A673 (cell line): ENCODE measurements at regions of chr1 and their contacts with region 1.

Region 1: DNA sequence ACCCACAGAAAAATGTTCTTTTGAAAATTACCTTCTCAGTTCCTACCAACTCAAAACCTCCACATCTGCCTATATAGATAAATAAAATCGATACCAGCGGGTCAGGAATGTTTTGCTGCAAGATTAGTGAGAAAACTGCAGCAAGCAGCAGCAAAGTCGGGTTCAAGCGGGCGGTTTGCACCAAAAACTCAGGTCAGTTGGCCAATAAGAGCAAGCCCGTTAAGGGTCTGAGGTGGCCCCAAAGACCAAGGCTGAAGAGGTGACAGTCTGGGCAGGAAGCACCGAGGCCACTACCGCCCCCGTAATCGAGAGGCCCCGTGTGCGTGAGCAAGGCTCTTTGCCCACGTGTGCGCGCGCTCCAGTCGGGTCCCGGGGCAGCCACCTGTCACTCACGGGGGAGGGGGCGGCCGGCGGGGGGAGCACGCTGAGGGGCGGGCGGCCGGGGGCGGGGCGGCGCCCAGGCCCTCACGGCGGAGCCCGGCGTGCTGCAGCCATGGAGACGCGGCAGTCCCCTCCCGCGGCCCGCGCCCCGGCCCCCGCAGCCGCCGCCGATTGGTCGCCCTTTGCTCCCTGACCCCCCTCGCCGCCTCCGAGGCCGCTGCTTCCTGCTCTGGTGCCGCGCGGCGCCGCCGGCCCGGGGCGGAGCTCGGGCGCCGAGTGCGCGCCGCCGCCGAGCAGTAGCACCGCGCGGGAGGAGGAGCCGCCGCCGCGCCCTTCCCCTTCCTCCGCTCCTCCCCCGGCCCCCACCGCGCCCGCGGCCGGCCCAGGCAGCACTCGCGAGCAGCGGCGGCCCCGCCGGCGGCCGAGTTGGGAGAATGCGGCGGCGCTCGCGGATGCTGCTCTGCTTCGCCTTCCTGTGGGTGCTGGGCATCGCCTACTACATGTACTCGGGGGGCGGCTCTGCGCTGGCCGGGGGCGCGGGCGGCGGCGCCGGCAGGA is at the start of gene GALNT2:
- DNase-seq: peak; percentile 94
- H3K4me3 ChIP-seq: peak within 1 kb of the TSS; percentile 96
- H3K27ac ChIP-seq: peak within 1 kb of the TSS; percentile 79
- H3K4me1 ChIP-seq: peaks cover 21% of the 10 kb centered on the region
- H3K27me3 ChIP-seq: no peaks in the 10 kb centered on the region
- CTCF ChIP-seq: no peak
- total RNA-seq, gene GALNT2: 80.5 and 94.6 TPM in 2 replicates

Region 2: DNA sequence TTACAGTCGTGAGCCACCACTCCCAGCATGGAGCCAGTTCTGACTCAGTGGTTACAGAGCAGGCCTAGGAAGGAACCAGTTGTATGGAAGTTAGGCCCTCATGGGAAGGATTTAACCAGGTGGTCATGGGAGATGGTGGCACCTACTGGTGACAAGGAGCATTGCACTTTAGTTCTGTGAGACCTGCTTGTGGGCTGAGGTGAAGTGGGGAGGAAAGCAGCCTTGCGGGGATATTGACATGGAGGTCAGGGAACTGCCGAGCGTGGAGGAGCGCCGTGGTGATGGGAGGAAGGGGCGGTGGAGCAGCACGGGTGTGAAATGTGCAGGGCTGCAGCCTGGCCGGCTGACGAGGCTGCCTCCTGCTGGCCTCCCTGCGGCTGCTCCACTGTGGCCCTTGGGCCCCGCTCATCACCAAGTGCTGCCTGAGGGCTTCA is 100.7 kb after region 1 on chr1:
- CTCF ChIA-PET with region 1: no interaction called
- POLR2A ChIA-PET with region 1: no interaction called
- intact Hi-C with region 1: loop called (anchors 2 kb)
- DNase-seq: peak; percentile 73
- H3K4me3 ChIP-seq: no peak overlapping the region
- H3K27ac ChIP-seq: no peak overlapping the region
- H3K4me1 ChIP-seq: peaks cover 33% of the 10 kb centered on the region
- H3K27me3 ChIP-seq: no peaks in the 10 kb centered on the region
- CTCF ChIP-seq: peak; percentile 74

Region 3: DNA sequence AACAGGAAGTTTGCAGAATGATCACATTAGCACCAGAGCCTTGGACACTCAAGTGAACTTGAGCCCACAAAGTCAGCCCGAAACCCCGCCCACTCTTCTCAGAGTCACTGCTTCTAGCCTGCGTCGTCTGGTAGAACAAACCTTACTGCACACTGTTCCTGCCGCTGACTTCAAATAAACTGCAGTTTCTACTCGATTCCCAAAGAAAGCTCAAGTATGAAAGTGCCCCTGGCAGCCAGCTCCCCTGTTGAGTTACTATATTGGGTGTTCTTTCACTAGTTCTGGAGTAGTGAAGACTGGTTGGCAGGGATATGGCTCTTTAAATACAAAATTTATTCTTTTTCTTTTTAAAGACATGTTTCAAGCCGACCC is 165.0 kb after region 1 on chr1:
- CTCF ChIA-PET with region 1: no interaction called
- POLR2A ChIA-PET with region 1: no interaction called
- intact Hi-C with region 1: loop called (anchors 10 kb)
- DNase-seq: peak; percentile 91
- H3K4me3 ChIP-seq: peak overlapping the region; percentile 32
- H3K27ac ChIP-seq: peak overlapping the region; percentile 96
- H3K4me1 ChIP-seq: peaks cover 61% of the 10 kb centered on the region
- H3K27me3 ChIP-seq: no peaks in the 10 kb centered on the region
- CTCF ChIP-seq: no peak

Region 4: GRCh38 chr1:230327892-230328284 is 261.2 kb after region 1 on chr1:
- CTCF ChIA-PET with region 1: no interaction called
- POLR2A ChIA-PET with region 1: no interaction called
- intact Hi-C with region 1: no loop called
- DNase-seq: peak; percentile 28
- H3K4me3 ChIP-seq: no peak overlapping the region
- H3K27ac ChIP-seq: no peak overlapping the region
- H3K4me1 ChIP-seq: no peaks in the 10 kb centered on the region
- H3K27me3 ChIP-seq: no peaks in the 10 kb centered on the region
- CTCF ChIP-seq: no peak